Astrocyte of the cerebellum (primary cell): ENCODE measurements at regions of chr9 and their contacts with region 1.

Region 1: DNA sequence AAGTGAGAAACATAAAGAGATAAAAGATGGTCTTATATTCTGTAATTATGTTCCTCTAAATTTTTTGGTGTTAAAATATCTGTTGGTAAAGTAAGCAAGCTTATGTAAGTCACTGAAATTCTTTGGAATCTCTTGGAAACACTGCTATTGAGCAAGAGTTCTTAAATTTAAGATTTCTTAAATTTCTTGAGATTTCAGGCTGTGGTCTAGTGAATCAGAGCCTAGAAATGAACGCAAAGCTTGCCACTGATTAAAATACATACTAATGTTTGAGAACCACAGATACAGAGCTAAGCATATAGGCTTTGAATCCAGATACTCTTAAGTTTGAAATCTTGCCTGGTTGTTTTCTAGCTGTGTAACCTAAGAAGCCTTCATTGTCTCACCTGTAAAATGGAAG is 133.4 kb downstream of the TRPM3 start:
- DNase-seq: peak; percentile 3
- H3K4me3 ChIP-seq: no peak overlapping the region
- CTCF ChIP-seq: no peak

Region 2: GRCh38 chr9:70883056-70883455 is 104.9 kb before region 1 on chr9:
- in situ Hi-C with region 1: loop called (anchors 25 kb)
- DNase-seq: peak; percentile 22
- H3K4me3 ChIP-seq: no peak overlapping the region
- CTCF ChIP-seq: no peak

Region 3: GRCh38 chr9:70935856-70936255 is 52.1 kb before region 1 on chr9:
- in situ Hi-C with region 1: no loop called
- DNase-seq: no peak
- H3K4me3 ChIP-seq: no peak overlapping the region
- CTCF ChIP-seq: no peak

Region 4: DNA sequence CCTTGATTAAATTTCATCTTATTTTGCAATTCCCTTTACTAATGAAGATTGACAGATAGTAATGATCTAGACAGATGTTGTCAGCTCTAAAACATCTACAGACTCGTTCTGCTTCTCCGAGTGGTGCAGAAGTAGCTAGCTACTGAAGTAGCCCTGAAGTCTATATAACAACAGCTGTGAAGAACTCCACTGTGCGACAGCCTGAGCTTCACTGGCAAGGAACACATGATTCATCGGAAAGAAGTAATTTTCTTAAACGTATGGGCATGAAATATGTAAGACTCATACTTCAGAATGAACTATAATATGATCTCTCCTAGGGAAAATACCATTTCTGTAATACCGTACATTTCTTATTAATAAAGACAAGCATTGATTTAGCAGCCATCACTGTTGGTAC is 37.2 kb after region 1 on chr9:
- in situ Hi-C with region 1: no loop called
- DNase-seq: no peak
- H3K4me3 ChIP-seq: no peak overlapping the region
- CTCF ChIP-seq: no peak

Region 5: GRCh38 chr9:71628247-71628646 is 640.3 kb after region 1 on chr9:
- in situ Hi-C with region 1: no loop called
- DNase-seq: no peak
- H3K4me3 ChIP-seq: no peak overlapping the region
- CTCF ChIP-seq: peak; percentile 16